ENCODE measurements at regions of chr20 and their contacts with region 1.

Region 1: GRCh38 chr20:50977051-50978045 is 18.7 kb downstream of the MOCS3 start:
- DNase-seq: no peak
- ATAC-seq: no peak
- H3K4me3 Mint-ChIP-seq: no peak overlapping the region
- H3K27ac Mint-ChIP-seq: no peak overlapping the region
- H3K4me1 Mint-ChIP-seq: peaks cover 2 to 9% (median 7%) of the 10 kb centered on the region in 4 donors
- H3K27me3 Mint-ChIP-seq: peaks cover 11 to 36% (median 25%) of the 10 kb centered on the region in 5 donors

Region 2: GRCh38 chr20:50987592-50988210 is 10.4 kb after region 1 on chr20:
- POLR2A ChIA-PET with region 1: interaction called, 10 read pairs
- DNase-seq: peak; percentile 28 to 81 (median 66)
- ATAC-seq: peak; percentile 81 to 95
- H3K4me3 Mint-ChIP-seq: no peak overlapping the region
- H3K27ac Mint-ChIP-seq: no peak overlapping the region
- H3K4me1 Mint-ChIP-seq: peaks cover 0 to 4% (median 0%) of the 10 kb centered on the region in 4 donors
- H3K27me3 Mint-ChIP-seq: peaks cover 6 to 37% (median 15%) of the 10 kb centered on the region in 5 donors

Measured in naive thymus-derived CD8-positive, alpha-beta T cell (primary cell).